OCI-LY7 (cell line): ENCODE measurements at regions of chr3 and their contacts with region 1.

Region 1: DNA sequence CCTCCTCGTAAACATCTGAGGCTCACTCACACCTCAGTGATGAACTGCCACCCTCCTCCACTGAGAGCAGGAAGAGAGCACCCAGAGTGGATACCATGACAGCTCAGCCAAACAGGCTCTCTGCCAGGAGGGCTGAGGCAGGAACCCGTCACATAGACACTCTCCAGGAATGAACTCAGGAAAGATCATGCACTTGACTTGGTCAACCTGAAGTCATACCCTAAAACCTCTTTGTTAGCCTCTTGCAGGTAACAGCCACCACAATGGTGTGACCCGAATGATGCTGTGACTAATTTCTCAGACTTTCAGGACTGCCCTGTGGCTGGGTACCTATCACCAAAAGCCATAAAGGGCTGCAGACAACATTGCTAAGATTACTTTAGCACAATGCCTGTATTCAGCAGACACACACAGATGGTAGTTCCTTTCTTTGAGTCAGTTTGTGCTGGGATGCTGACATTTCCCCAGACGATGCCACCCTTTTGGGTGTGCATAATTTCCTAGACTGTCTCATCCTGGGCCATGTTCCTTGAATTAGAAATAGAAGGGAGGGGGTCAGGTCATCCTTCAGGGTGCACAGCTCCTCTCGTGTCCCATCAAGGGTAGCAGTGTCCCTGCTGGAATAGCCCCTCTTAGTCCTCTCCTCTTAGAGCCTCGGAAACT is 30.3 kb downstream of the CX3CR1 start:
- DNase-seq: no peak
- H3K4me3 ChIP-seq: no peak overlapping the region
- H3K27ac ChIP-seq: no peak overlapping the region
- H3K4me1 ChIP-seq: peaks cover 19% of the 10 kb centered on the region
- CTCF ChIP-seq: no peak

Region 2: GRCh38 chr3:39232859-39233258 is 16.7 kb before region 1 on chr3:
- CTCF ChIA-PET with region 1: interaction called, 3 read pairs
- POLR2A ChIA-PET with region 1: interaction called, 12 read pairs
- intact Hi-C with region 1: loop called (anchors 2 kb)
- DNase-seq: peak; percentile 55
- H3K4me3 ChIP-seq: no peak overlapping the region
- H3K27ac ChIP-seq: no peak overlapping the region
- H3K4me1 ChIP-seq: peaks cover 22% of the 10 kb centered on the region
- CTCF ChIP-seq: no peak

Region 3: DNA sequence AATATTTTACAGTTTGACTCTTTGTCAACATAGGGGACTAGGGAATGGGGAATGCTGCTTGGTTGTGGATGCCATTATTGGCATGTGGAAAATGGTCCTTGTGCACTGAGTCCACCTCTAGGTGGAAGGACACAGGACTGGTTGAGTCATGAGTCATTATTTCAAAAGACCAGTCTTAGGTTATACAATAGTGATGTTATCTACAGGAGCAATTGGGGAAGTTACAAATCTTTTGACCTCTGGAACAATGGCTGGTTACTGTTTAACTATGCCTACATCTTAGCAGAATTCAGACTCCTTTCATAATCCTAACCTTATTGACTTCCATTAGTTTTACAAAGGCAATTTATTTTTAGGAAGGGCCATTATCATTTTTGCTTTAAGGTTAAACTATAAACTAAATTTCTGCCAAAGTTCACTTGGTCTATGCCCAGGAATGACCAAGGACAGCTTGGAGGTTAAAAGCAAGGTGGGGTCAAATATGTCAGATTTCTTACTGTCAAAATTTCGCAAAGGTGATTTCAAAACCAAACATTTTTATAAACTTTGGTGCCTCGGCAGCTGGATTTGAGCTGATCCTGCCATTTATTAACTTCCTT is 68.1 kb after region 1 on chr3:
- CTCF ChIA-PET with region 1: no interaction called
- POLR2A ChIA-PET with region 1: no interaction called
- intact Hi-C with region 1: no loop called
- DNase-seq: no peak
- H3K4me3 ChIP-seq: no peak overlapping the region
- H3K27ac ChIP-seq: no peak overlapping the region
- H3K4me1 ChIP-seq: no peaks in the 10 kb centered on the region
- CTCF ChIP-seq: no peak